ENCODE measurements at regions of chr19 and their contacts with region 1.

Region 1: GRCh38 chr19:1183534-1184172 is 9.6 kb upstream of the SBNO2 start:
- DNase-seq: peak; percentile 93 to 95
- H3K4me3 ChIP-seq: peak overlapping the region; percentile 8; the same call in 1 of the 2 replicates
- H3K27ac ChIP-seq: peak overlapping the region; percentile 95
- H3K4me1 ChIP-seq: peaks cover 57% of the 10 kb centered on the region
- H3K27me3 ChIP-seq: no peaks in the 10 kb centered on the region
- CTCF ChIP-seq: no peak

Region 2: GRCh38 chr19:1113033-1113985 is 70.3 kb before region 1 on chr19:
- CTCF ChIA-PET with region 1: interaction called, 11 read pairs
- POLR2A ChIA-PET with region 1: no interaction called
- intact Hi-C with region 1: no loop called
- DNase-seq: peak; percentile 69 to 72
- H3K4me3 ChIP-seq: no peak overlapping the region
- H3K27ac ChIP-seq: no peak overlapping the region
- H3K4me1 ChIP-seq: peaks cover 5% of the 10 kb centered on the region; the same call in 1 of the 2 replicates
- H3K27me3 ChIP-seq: no peaks in the 10 kb centered on the region
- CTCF ChIP-seq: peak; percentile 82

Region 3: GRCh38 chr19:1131738-1132551 is 51.7 kb before region 1 on chr19:
- CTCF ChIA-PET with region 1: no interaction called
- POLR2A ChIA-PET with region 1: no interaction called
- intact Hi-C with region 1: no loop called
- DNase-seq: peak in 1 of 2 experiments; percentile 79
- H3K4me3 ChIP-seq: peak overlapping the region; percentile 56; the same call in 1 of the 2 replicates
- H3K27ac ChIP-seq: no peak overlapping the region
- H3K4me1 ChIP-seq: no peaks in the 10 kb centered on the region
- H3K27me3 ChIP-seq: no peaks in the 10 kb centered on the region
- CTCF ChIP-seq: no peak

Region 4: DNA sequence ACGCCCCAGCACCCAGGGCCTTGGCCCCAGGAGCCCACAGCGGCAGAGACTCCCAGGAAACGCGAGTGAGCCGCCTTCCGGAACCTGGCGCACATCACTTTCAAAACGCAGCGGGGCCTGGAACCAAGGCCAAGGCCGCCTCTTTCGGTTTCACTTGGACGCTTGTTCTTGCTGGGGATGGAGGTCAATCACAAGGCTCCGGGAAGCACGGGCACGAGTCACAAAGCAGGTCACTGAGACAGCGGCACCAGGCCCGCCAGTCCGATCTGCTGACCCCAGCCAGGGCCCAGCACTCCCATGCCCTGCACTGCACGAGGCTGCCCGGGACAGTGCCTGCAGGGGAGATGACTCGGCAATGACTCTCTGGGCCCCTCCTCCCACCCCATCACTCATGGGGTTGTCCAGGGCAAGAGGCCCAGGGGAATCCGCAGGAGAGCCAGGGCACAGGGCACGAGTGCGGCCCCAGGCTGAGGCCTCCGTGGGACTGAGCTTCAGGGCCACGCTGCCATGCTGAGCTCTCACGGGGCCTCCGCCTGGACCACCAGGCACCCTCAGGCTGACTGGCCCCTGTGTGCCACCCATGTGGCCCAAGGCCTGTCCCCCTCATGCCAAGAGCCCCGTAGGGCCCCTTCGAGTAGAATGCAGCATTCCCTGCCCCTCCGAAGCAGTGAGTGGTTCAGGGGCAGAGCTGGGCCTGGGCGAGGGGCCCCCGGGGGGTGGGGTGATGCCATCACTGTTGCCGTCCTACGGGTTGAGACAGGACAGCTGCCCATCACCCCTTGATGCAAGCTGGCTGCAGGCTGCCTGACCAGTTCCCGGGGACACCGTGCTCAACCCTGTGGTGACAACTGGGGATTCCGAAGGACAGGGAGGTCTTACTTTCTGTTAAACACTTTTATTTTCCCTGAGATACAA is 14.5 kb before region 1 on chr19:
- CTCF ChIA-PET with region 1: no interaction called
- POLR2A ChIA-PET with region 1: interaction called, 9 read pairs
- intact Hi-C with region 1: loop called (anchors 2 kb)
- DNase-seq: peak; percentile 74 to 78
- H3K4me3 ChIP-seq: peak overlapping the region; percentile 78
- H3K27ac ChIP-seq: peak overlapping the region; percentile 84
- H3K4me1 ChIP-seq: peaks cover 50% of the 10 kb centered on the region
- H3K27me3 ChIP-seq: no peaks in the 10 kb centered on the region
- CTCF ChIP-seq: no peak

Region 5: DNA sequence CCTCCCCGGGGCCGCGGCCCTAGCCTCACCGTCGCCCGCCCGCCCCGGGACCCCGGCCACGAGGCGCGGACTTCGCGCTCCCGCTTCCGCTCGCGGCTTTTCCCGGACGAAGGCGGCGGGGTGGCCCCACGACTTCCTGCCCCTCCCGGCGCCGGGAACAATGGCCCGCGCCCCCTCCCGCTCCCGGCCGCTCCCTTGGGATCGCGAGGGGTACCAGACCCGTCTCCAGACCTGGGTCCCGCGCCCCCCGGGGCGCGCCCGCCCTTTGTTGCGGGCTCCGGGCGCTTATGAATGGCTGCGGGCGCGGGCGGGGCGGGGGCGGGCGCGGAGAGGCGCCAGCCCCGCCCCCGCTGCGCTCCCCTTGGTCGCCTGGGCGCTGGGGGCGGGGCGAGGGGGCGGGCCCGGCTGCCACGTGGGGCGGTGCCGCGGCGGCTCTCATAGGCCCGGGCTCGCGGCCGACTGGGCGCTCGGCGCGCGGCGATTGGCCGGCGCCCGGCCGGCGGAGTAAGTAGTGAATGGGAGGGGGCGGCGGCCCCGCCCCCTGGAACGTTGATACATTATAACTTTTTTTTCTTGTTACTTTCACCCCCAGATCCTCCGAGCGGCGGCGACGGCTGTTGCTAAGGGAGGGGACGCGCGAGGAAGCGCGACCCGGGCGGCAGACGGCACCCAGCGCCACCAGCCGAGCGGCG is 65.8 kb after region 1 on chr19:
- CTCF ChIA-PET with region 1: no interaction called
- POLR2A ChIA-PET with region 1: no interaction called
- intact Hi-C with region 1: loop called (anchors 5 kb)
- DNase-seq: peak; percentile 70 to 90
- H3K4me3 ChIP-seq: peak overlapping the region; percentile 61; the same call in 1 of the 2 replicates
- H3K27ac ChIP-seq: peak overlapping the region; percentile 84
- H3K4me1 ChIP-seq: peaks cover 22% of the 10 kb centered on the region
- H3K27me3 ChIP-seq: no peaks in the 10 kb centered on the region
- CTCF ChIP-seq: no peak

Measured in PC-9 (cell line).